ENCODE measurements at regions of chr4 and their contacts with region 1.

Region 1: GRCh38 chr4:38466401-38466800 is 197.6 kb upstream of the KLF3 start:
- DNase-seq: no peak
- H3K4me3 ChIP-seq: no peak overlapping the region
- CTCF ChIP-seq: no peak
- POLR2A ChIP-seq: no peak

Region 2: DNA sequence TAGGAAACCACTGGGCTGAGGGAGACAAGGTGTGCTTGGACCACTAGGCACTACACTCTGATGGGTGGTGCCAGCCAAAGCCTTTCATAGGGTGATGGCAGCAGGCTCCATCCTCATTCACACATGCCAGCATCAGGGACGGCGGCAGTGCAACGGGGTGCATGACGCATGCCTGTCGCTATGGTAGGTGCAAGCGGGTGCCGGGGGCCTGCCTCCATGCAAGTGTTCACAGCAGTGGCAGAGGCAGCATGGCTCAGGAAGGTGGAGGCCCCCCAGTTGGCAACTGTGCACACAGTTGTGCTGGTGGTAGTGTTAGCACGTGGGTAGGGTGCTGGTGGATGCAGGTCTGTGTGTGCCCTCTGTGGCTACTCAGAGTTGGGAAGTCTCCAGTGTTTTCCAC is 964.3 kb before region 1 on chr4:
- intact Hi-C with region 1: no loop called
- DNase-seq: no peak
- H3K4me3 ChIP-seq: no peak overlapping the region
- CTCF ChIP-seq: no peak
- POLR2A ChIP-seq: no peak

Region 3: DNA sequence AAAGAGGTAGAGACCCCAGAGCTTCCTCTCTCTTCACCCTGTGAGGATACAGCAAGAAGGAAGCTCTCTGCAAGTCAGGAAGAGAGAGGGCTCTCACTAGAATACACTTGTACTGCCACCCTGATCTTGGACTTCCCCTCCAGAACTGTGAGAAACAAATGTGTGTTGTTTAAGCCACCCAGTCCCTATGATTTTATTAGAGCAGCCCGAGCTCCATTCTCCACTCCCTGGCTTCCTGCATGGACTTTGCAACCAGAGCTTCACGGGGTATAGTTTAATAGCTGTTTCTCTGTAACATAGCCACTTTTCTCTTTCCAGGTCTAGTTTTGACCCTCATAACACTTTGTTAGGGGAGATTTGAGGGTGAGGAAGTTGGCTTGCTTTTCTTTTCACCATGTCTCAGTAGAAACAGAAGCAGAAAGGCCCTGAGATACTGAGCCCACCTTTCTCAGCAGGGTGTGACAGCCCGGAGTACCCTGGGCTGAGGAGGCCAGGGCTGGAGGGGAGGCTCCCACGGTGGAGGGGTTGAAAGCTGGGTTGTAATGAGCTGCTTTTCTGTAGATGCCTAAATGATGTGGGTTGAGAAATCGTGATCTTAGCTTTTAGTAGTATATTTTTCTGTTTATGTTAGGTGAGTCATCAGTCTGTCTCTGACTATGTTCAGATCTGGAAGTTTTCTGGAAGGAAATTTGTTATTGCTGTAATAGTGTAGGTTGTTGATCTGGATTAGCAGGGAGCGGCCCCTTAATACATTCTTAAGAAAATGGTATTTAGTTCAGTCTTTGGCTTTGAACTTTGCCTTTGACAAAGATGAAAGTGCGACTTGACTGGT is 387.6 kb before region 1 on chr4:
- intact Hi-C with region 1: no loop called
- DNase-seq: peak in 1 of 2 donors; percentile 54
- H3K4me3 ChIP-seq: no peak overlapping the region
- CTCF ChIP-seq: no peak
- POLR2A ChIP-seq: no peak

Region 4: GRCh38 chr4:38424151-38424871 is 42.1 kb before region 1 on chr4:
- intact Hi-C with region 1: no loop called
- DNase-seq: no peak
- H3K4me3 ChIP-seq: no peak overlapping the region
- CTCF ChIP-seq: no peak
- POLR2A ChIP-seq: no peak

Region 5: GRCh38 chr4:38562751-38563198 is 96.4 kb after region 1 on chr4:
- intact Hi-C with region 1: loop called (anchors 5 kb)
- DNase-seq: peak in 1 of 2 donors; percentile 59
- H3K4me3 ChIP-seq: no peak overlapping the region
- CTCF ChIP-seq: no peak
- POLR2A ChIP-seq: no peak